Common myeloid progenitor, CD34-positive (primary cell): ENCODE measurements at regions of chr2 and their contacts with region 1.

Region 1: GRCh38 chr2:42095923-42096408 is 48.1 kb downstream of the PKDCC start:
- DNase-seq: peak; percentile 70 to 85 (median 76)
- H3K4me3 ChIP-seq: no peak overlapping the region
- H3K27ac ChIP-seq: no peak overlapping the region
- H3K4me1 ChIP-seq: peaks cover 0 to 25% (median 15%) of the 10 kb centered on the region in 4 experiments
- H3K27me3 ChIP-seq: peaks cover 0 to 18% (median 0%) of the 10 kb centered on the region in 5 experiments

Region 2: DNA sequence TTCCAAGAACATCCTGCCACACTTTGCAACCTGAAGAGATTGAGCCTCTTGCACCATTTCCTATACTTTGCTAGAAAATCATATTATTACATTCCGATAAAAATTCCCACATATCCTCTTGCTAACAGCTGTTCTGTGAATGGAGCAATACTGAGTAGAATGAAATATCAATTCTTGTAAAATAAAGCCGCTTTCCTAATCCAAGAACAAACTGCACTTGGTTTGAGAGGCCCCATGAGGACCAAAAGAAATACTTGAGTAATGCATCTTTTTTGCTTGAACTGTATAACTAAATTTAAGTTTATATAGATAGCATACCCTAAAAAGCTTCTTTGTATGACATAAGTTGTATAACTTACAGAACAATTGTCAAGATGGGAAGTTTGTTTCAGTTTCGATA is 1011.6 kb before region 1 on chr2:
- CTCF ChIA-PET with region 1: no interaction called
- POLR2A ChIA-PET with region 1: no interaction called
- DNase-seq: no peak
- H3K4me3 ChIP-seq: no peak overlapping the region
- H3K27ac ChIP-seq: no peak overlapping the region
- H3K4me1 ChIP-seq: no peaks in the 10 kb centered on the region
- H3K27me3 ChIP-seq: no peaks in the 10 kb centered on the region

Region 3: GRCh38 chr2:41972819-41973218 is 123.1 kb before region 1 on chr2:
- CTCF ChIA-PET with region 1: no interaction called
- POLR2A ChIA-PET with region 1: no interaction called
- DNase-seq: peak in 2 of 3 donors; percentile 5 to 10
- H3K4me3 ChIP-seq: no peak overlapping the region
- H3K27ac ChIP-seq: no peak overlapping the region
- H3K4me1 ChIP-seq: no peaks in the 10 kb centered on the region
- H3K27me3 ChIP-seq: no peaks in the 10 kb centered on the region

Region 4: DNA sequence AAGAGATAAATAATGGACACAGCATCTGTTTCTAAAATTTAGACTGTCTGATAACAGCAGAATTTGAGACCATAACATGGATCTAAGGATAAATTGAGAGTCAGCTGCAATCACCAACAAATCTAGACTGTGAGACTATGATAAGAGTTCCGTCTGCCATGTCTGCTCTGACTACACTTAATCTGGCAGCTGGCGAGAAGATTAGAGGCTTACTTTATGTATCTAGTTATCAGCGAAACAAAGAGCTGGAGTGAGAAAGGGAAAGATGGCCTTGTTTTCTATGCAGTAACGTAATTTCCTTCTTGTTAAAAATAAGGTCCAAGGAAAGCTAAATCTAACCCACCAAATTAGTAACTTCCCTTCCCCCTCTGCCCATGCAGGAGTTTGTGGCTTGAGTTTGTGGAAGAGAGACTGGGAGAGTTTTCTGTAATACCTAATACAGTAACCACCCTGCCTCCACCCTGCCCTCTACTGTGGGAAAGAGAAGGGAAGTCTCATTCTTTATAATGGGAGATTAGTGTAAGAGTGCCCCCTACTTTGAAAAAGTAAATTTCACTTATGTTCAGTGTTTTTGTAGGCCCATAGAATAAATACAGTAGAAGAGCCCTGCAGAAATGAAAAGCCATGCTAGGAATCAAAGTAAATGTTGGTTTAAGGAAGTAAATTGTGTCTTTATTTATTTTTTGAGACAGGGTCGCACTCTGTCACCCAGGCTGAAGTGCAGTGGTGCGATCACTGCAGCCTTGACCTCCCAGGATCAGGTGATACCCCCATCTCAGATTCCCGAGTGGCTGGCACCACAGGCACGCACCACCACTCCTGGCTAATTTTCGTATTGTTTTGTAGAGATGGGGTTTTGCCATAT is 100.7 kb after region 1 on chr2:
- CTCF ChIA-PET with region 1: interaction called, 26 read pairs
- POLR2A ChIA-PET with region 1: no interaction called
- DNase-seq: peak; percentile 67 to 73 (median 72)
- H3K4me3 ChIP-seq: no peak overlapping the region
- H3K27ac ChIP-seq: peak overlapping the region in 1 of 2 experiments; percentile 9
- H3K4me1 ChIP-seq: peaks cover 0 to 11% (median 8%) of the 10 kb centered on the region in 4 experiments
- H3K27me3 ChIP-seq: no peaks in the 10 kb centered on the region

Region 5: GRCh38 chr2:42328148-42328833 is 232.3 kb after region 1 on chr2:
- CTCF ChIA-PET with region 1: interaction called, 39 read pairs
- POLR2A ChIA-PET with region 1: no interaction called
- DNase-seq: peak; percentile 25 to 67 (median 61)
- H3K4me3 ChIP-seq: no peak overlapping the region
- H3K27ac ChIP-seq: no peak overlapping the region
- H3K4me1 ChIP-seq: no peaks in the 10 kb centered on the region
- H3K27me3 ChIP-seq: no peaks in the 10 kb centered on the region